ENCODE measurements at regions of chr1 and their contacts with region 1.

Region 1: GRCh38 chr1:226083302-226084101 is 21.0 kb downstream of the H3-3A start:
- DNase-seq: peak; percentile 90 to 92
- ATAC-seq: peak; percentile 96 to 99 (median 98)
- H3K4me3 ChIP-seq: peak overlapping the region; percentile 55 to 90 (median 68)
- H3K27ac ChIP-seq: peak overlapping the region in 9 of 10 donors; percentile 34 to 80 (median 62)
- H3K4me1 ChIP-seq: peaks cover 0 to 17% (median 13%) of the 10 kb centered on the region in 9 donors
- H3K27me3 ChIP-seq: peaks cover 0 to 6% (median 0%) of the 10 kb centered on the region in 7 donors
- CTCF ChIP-seq: peak in 3 of 9 donors; percentile 19 to 31 (median 23)

Region 2: DNA sequence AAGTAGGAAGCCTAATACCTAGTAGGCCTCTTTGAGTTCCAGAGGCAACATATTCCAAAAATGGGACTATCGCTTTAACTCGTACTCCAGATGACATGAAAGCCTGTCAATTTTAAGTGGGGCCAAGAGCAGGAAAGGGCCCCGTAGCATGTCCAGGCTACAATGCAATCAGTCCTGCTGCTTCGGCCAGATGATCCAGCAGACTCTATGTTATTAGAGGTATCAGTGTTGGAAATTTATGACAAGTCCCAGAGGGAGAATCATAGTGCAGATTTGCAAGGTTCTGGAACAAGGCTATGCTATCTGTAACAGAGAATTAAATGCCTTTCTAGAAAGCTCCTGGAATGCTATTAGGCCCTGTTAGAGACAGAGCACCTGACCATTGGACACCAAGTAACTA is 362.6 kb before region 1 on chr1:
- intact Hi-C with region 1: no loop called
- DNase-seq: no peak
- ATAC-seq: no peak
- H3K4me3 ChIP-seq: no peak overlapping the region
- H3K27ac ChIP-seq: no peak overlapping the region
- H3K4me1 ChIP-seq: no peaks in the 10 kb centered on the region
- H3K27me3 ChIP-seq: no peaks in the 10 kb centered on the region
- CTCF ChIP-seq: no peak

Region 3: DNA sequence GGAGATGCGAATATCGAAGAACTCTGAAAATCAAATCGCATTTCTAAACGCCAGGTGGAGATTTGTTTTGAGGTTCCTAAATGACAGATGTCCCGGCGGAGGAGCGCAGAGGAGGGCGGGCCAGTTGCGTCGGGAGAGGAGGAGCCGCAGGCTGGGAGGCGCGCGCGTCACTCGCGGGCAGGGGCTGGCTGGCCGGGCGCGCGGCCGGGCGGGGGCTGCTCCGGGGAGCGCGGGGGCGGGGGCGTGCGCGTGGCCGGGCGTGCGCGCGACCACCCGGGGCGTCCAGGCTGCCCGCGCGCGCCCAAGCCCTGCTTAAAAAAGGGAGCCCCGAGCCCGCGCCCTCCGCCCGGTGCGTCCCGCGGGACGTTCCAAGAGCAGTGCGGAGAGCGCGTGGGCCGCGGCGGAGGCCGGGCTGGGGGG is 26.3 kb after region 1 on chr1:
- intact Hi-C with region 1: loop called in 1 of 10 experiments (anchors 2 kb)
- DNase-seq: peak; percentile 90 to 92
- ATAC-seq: peak; percentile 83 to 93 (median 89)
- H3K4me3 ChIP-seq: peak overlapping the region; percentile 37 to 75 (median 68)
- H3K27ac ChIP-seq: peak overlapping the region; percentile 93 to 100 (median 99)
- H3K4me1 ChIP-seq: peaks cover 18 to 45% (median 34%) of the 10 kb centered on the region in 9 donors
- H3K27me3 ChIP-seq: no peaks in the 10 kb centered on the region
- CTCF ChIP-seq: peak in 3 of 9 donors; percentile 43 to 47 (median 47)

Measured in heart right ventricle (tissue), 16 donors.